ENCODE measurements at regions of chr19 and their contacts with region 1.

Region 1: GRCh38 chr19:11798391-11799330 is at the start of gene ZNF491:
- DNase-seq: peak; percentile 87
- ATAC-seq: peak; percentile 98
- H3K4me3 ChIP-seq: peak within 1 kb of the TSS; percentile 53 to 76 (median 61)
- H3K4me3 Mint-ChIP-seq: peak within 1 kb of the TSS; percentile 93
- H3K27ac ChIP-seq: peak within 1 kb of the TSS; percentile 2 to 52
- H3K27ac Mint-ChIP-seq: peak within 1 kb of the TSS; percentile 74
- H3K4me1 ChIP-seq: peaks cover 14 to 17% of the 10 kb centered on the region in 2 donors
- H3K4me1 Mint-ChIP-seq: peaks cover 21% of the 10 kb centered on the region
- H3K27me3 ChIP-seq: no peaks in the 10 kb centered on the region
- H3K27me3 Mint-ChIP-seq: no peaks in the 10 kb centered on the region
- CTCF ChIP-seq: no peak
- total RNA-seq, gene ZNF491: 1.7 and 2.4 TPM in 2 replicates

Region 2: DNA sequence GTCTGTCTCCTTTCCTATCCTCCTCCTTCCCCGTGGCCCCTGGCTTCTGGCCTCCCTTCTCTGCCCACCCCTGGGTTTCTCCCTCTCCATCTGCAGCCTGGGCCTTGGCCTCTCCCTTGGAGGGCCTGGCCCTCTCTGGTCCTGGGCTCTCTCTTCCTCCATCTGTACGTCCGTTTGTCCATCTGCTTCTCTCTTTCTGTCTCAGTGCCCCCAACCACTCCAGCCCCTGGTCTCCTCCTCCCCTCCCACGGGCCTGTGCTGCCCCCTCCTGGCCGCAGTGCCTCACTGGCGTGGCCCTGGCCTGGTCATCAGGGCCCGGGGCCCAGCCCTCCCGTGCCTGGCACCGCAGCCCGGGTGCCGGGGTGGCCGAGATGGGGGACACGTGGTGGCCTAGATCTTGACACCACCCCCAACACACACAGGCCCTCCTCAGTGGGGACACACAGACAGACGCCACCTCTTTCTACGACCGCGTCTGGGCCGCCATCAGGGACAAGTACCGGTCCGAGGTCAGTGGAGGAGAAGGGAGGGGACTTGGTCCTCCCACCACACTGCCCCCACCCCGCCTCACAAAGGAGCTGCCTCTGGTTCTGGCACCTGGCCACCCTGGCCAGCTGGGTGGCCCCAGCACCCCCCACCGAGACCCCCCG is 351.9 kb before region 1 on chr19:
- CTCF ChIA-PET with region 1: no interaction called
- POLR2A ChIA-PET with region 1: no interaction called
- intact Hi-C with region 1: no loop called
- DNase-seq: peak; percentile 69
- ATAC-seq: peak; percentile 76
- H3K4me3 ChIP-seq: no peak overlapping the region
- H3K4me3 Mint-ChIP-seq: no peak overlapping the region
- H3K27ac ChIP-seq: no peak overlapping the region
- H3K27ac Mint-ChIP-seq: no peak overlapping the region
- H3K4me1 ChIP-seq: no peaks in the 10 kb centered on the region
- H3K4me1 Mint-ChIP-seq: no peaks in the 10 kb centered on the region
- H3K27me3 ChIP-seq: no peaks in the 10 kb centered on the region
- H3K27me3 Mint-ChIP-seq: no peaks in the 10 kb centered on the region
- CTCF ChIP-seq: peak; percentile 77

Region 3: GRCh38 chr19:11766597-11767591 is 31.8 kb before region 1 on chr19 and contains the start of gene ZNF441:
- CTCF ChIA-PET with region 1: interaction called, 8 read pairs
- POLR2A ChIA-PET with region 1: interaction called, 5 read pairs
- intact Hi-C with region 1: loop called (anchors 1 kb)
- DNase-seq: peak; percentile 91
- ATAC-seq: peak; percentile 95
- H3K4me3 ChIP-seq: peak within 1 kb of the TSS; percentile 32 to 94 (median 87)
- H3K4me3 Mint-ChIP-seq: peak within 1 kb of the TSS; percentile 99
- H3K27ac ChIP-seq: peak within 1 kb of the TSS; percentile 90 to 94
- H3K27ac Mint-ChIP-seq: peak within 1 kb of the TSS; percentile 99
- H3K4me1 ChIP-seq: peaks cover 16 to 22% of the 10 kb centered on the region in 2 donors
- H3K4me1 Mint-ChIP-seq: peaks cover 23% of the 10 kb centered on the region
- H3K27me3 ChIP-seq: no peaks in the 10 kb centered on the region
- H3K27me3 Mint-ChIP-seq: peaks cover 4% of the 10 kb centered on the region
- CTCF ChIP-seq: no peak
- total RNA-seq, gene ZNF441: 43.5 and 45.3 TPM in 2 replicates

Region 4: GRCh38 chr19:11814029-11814699 is 15.5 kb after region 1 on chr19 and contains the start of gene ZNF440:
- CTCF ChIA-PET with region 1: interaction called, 54 read pairs
- POLR2A ChIA-PET with region 1: interaction called, 6 read pairs
- intact Hi-C with region 1: loop called (anchors 1 kb)
- DNase-seq: peak; percentile 85
- ATAC-seq: peak; percentile 99
- H3K4me3 ChIP-seq: peak within 1 kb of the TSS; percentile 75 to 94 (median 82)
- H3K4me3 Mint-ChIP-seq: peak within 1 kb of the TSS; percentile 91
- H3K27ac ChIP-seq: peak within 1 kb of the TSS; percentile 39 to 66
- H3K27ac Mint-ChIP-seq: peak within 1 kb of the TSS; percentile 85
- H3K4me1 ChIP-seq: peaks cover 4 to 14% of the 10 kb centered on the region in 2 donors
- H3K4me1 Mint-ChIP-seq: peaks cover 29% of the 10 kb centered on the region
- H3K27me3 ChIP-seq: no peaks in the 10 kb centered on the region
- H3K27me3 Mint-ChIP-seq: no peaks in the 10 kb centered on the region
- CTCF ChIP-seq: no peak
- total RNA-seq, gene ZNF440: 22.4 and 23.4 TPM in 2 replicates

Region 5: GRCh38 chr19:11881151-11881800 is 82.6 kb after region 1 on chr19:
- CTCF ChIA-PET with region 1: interaction called, 10 read pairs
- POLR2A ChIA-PET with region 1: interaction called, 3 read pairs
- intact Hi-C with region 1: no loop called
- DNase-seq: peak; percentile 78
- ATAC-seq: peak; percentile 56
- H3K4me3 ChIP-seq: no peak overlapping the region
- H3K4me3 Mint-ChIP-seq: no peak overlapping the region
- H3K27ac ChIP-seq: no peak overlapping the region
- H3K27ac Mint-ChIP-seq: no peak overlapping the region
- H3K4me1 ChIP-seq: peaks cover 0 to 6% of the 10 kb centered on the region in 2 donors
- H3K4me1 Mint-ChIP-seq: peaks cover 4% of the 10 kb centered on the region
- H3K27me3 ChIP-seq: no peaks in the 10 kb centered on the region
- H3K27me3 Mint-ChIP-seq: no peaks in the 10 kb centered on the region
- CTCF ChIP-seq: peak; percentile 77

Region 6: GRCh38 chr19:11987405-11988281 is 189.0 kb after region 1 on chr19:
- CTCF ChIA-PET with region 1: interaction called, 29 read pairs
- POLR2A ChIA-PET with region 1: no interaction called
- intact Hi-C with region 1: loop called (anchors 1 kb)
- DNase-seq: peak; percentile 93
- ATAC-seq: peak; percentile 93
- H3K4me3 ChIP-seq: peak overlapping the region; percentile 86 to 98 (median 97)
- H3K4me3 Mint-ChIP-seq: peak overlapping the region; percentile 96
- H3K27ac ChIP-seq: peak overlapping the region; percentile 85 to 92
- H3K27ac Mint-ChIP-seq: peak overlapping the region; percentile 89
- H3K4me1 ChIP-seq: peaks cover 0 to 5% of the 10 kb centered on the region in 2 donors
- H3K4me1 Mint-ChIP-seq: peaks cover 24% of the 10 kb centered on the region
- H3K27me3 ChIP-seq: no peaks in the 10 kb centered on the region
- H3K27me3 Mint-ChIP-seq: no peaks in the 10 kb centered on the region
- CTCF ChIP-seq: no peak